Caco-2 (cell line): ENCODE measurements at regions of chr14 and their contacts with region 1.

Region 1: GRCh38 chr14:39232554-39233415 is 930 bp upstream of the MIA2 start:
- DNase-seq: peak in 1 of 2 experiments; percentile 38
- H3K4me3 ChIP-seq: no peak overlapping the region
- H3K4me3 Mint-ChIP-seq: no peak overlapping the region
- H3K27ac Mint-ChIP-seq: peak overlapping the region; percentile 64
- H3K4me1 ChIP-seq: peaks cover 38% of the 10 kb centered on the region
- H3K4me1 Mint-ChIP-seq: peaks cover 5% of the 10 kb centered on the region
- H3K27me3 ChIP-seq: no peaks in the 10 kb centered on the region
- H3K27me3 Mint-ChIP-seq: no peaks in the 10 kb centered on the region
- CTCF ChIP-seq: no peak

Region 2: DNA sequence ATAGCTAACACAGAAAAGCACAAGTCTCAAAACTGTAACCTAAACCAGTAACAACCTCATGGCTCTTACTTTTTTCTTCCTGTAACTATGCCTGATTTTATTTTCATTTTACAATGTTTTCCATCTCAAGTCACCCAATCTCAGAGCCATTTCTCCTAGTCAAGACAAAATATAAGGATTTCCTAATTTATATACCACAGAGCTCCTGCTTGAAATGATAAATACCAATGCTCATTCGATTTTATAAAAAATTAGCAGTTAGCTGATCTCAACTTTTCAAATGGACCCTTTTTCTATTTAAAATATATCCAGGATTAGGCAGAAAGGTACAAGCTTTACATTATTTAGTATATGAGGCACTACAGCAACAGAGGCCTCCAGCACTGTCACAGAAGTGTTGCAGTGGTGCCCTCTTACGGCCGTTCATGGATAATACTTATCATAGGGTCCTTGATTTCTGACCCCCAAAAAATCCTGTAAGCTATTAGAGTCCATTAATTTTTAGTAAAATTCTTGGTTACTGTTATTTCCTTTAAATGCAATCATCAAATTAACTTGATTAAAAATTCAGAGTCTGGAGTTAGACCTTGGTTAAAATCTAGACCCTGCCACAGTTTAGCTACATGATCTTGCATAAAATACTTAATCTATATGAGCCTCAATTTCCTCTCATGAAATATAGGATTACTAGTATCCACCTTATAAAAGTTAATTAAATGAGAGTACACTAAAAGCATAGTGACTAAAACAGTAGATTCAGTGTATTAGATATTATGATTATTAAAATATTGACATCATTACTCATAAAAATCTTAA is 198.1 kb before region 1 on chr14:
- CTCF ChIA-PET with region 1: no interaction called
- POLR2A ChIA-PET with region 1: no interaction called
- intact Hi-C with region 1: no loop called
- DNase-seq: no peak
- H3K4me3 ChIP-seq: no peak overlapping the region
- H3K4me3 Mint-ChIP-seq: no peak overlapping the region
- H3K27ac Mint-ChIP-seq: no peak overlapping the region
- H3K4me1 ChIP-seq: no peaks in the 10 kb centered on the region
- H3K4me1 Mint-ChIP-seq: no peaks in the 10 kb centered on the region
- H3K27me3 ChIP-seq: no peaks in the 10 kb centered on the region
- H3K27me3 Mint-ChIP-seq: no peaks in the 10 kb centered on the region
- CTCF ChIP-seq: peak in 1 of 2 experiments; percentile 42

Region 3: GRCh38 chr14:39203659-39204606 is 28.9 kb before region 1 on chr14:
- CTCF ChIA-PET with region 1: no interaction called
- POLR2A ChIA-PET with region 1: interaction called, 6 read pairs
- intact Hi-C with region 1: loop called (anchors 1 kb)
- DNase-seq: peak; percentile 85 to 95
- H3K4me3 ChIP-seq: no peak overlapping the region
- H3K4me3 Mint-ChIP-seq: peak overlapping the region; percentile 20
- H3K27ac Mint-ChIP-seq: peak overlapping the region; percentile 57
- H3K4me1 ChIP-seq: peaks cover 28% of the 10 kb centered on the region
- H3K4me1 Mint-ChIP-seq: peaks cover 18% of the 10 kb centered on the region
- H3K27me3 ChIP-seq: no peaks in the 10 kb centered on the region
- H3K27me3 Mint-ChIP-seq: no peaks in the 10 kb centered on the region
- CTCF ChIP-seq: no peak

Region 4: DNA sequence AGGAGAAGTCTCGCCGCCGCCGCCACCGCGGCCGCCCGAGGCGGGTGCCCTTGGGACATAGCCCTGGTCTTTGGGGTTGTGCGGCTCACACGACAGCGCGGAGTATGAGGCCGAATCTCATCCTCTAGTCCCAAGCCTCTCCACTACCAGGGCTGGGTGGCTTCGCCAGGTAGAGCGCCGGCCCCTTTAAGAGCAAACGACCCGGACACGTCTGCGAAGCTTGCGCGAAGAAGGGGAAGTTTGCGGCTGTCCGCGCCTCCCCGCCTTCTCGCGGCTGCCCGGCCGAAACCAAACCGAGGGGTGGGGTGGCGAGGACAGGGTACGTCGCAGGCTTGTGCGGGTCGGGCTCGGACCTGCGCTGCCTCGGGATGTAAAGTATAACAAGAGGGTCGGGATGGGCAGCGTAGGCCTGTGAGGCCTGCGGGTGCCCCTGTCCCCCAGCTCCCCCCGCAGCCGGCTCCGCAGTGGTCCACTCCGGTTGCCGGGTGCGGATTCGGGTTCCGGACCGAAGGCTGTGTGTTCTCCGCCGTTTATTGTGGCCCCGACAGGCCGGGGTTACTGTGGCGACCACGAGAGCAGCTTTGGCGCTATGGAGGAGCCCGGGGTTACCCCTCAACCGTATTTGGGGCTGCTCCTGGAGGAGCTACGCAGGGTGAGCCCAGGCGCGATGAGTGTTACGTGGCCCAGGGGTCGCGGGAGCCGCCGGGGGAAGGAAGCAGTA is 34.2 kb after region 1 on chr14:
- CTCF ChIA-PET with region 1: no interaction called
- POLR2A ChIA-PET with region 1: no interaction called
- intact Hi-C with region 1: loop called (anchors 1 kb)
- DNase-seq: peak; percentile 85 to 86
- H3K4me3 ChIP-seq: peak overlapping the region; percentile 57
- H3K4me3 Mint-ChIP-seq: peak overlapping the region; percentile 95
- H3K27ac Mint-ChIP-seq: peak overlapping the region; percentile 98
- H3K4me1 ChIP-seq: peaks cover 22% of the 10 kb centered on the region
- H3K4me1 Mint-ChIP-seq: peaks cover 13% of the 10 kb centered on the region
- H3K27me3 ChIP-seq: no peaks in the 10 kb centered on the region
- H3K27me3 Mint-ChIP-seq: no peaks in the 10 kb centered on the region
- CTCF ChIP-seq: no peak

Region 5: DNA sequence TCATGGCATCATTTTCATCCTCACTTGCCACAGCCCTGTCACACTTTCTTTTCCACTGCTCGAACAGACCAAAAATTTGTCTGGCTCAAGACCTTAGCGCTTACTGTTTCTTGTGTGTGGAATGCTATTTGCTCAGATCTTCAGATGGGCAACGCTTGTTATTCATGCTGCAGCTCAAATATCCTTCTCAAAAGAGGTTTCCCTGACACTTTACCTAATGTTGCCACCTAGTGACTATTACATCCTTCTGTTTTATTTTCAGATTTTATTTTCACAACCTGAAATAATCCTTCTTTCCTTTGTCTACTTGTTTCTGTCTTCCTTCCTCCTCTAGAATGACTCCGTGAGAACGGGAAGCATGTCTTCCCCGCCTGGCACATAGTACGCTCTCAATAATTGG is 193.8 kb after region 1 on chr14:
- CTCF ChIA-PET with region 1: interaction called, 11 read pairs
- POLR2A ChIA-PET with region 1: no interaction called
- intact Hi-C with region 1: loop called (anchors 1 kb)
- DNase-seq: peak in 1 of 2 experiments; percentile 6
- H3K4me3 ChIP-seq: no peak overlapping the region
- H3K4me3 Mint-ChIP-seq: no peak overlapping the region
- H3K27ac Mint-ChIP-seq: no peak overlapping the region
- H3K4me1 ChIP-seq: peaks cover 6% of the 10 kb centered on the region; the same call in 1 of the 2 replicates
- H3K4me1 Mint-ChIP-seq: peaks cover 23% of the 10 kb centered on the region
- H3K27me3 ChIP-seq: no peaks in the 10 kb centered on the region
- H3K27me3 Mint-ChIP-seq: no peaks in the 10 kb centered on the region
- CTCF ChIP-seq: peak in 1 of 2 experiments; percentile 4

Region 6: GRCh38 chr14:39469094-39469710 is 236.4 kb after region 1 on chr14:
- CTCF ChIA-PET with region 1: no interaction called
- POLR2A ChIA-PET with region 1: no interaction called
- intact Hi-C with region 1: loop called (anchors 1 kb)
- DNase-seq: peak; percentile 40 to 42
- H3K4me3 ChIP-seq: no peak overlapping the region
- H3K4me3 Mint-ChIP-seq: no peak overlapping the region
- H3K27ac Mint-ChIP-seq: no peak overlapping the region
- H3K4me1 ChIP-seq: peaks cover 4% of the 10 kb centered on the region; the same call in 1 of the 2 replicates
- H3K4me1 Mint-ChIP-seq: no peaks in the 10 kb centered on the region
- H3K27me3 ChIP-seq: no peaks in the 10 kb centered on the region
- H3K27me3 Mint-ChIP-seq: peaks cover 13% of the 10 kb centered on the region
- CTCF ChIP-seq: peak in 1 of 2 experiments; percentile 34